Esophagus muscularis mucosa (tissue), 4 donors: ENCODE measurements at regions of chr9 and their contacts with region 1.

Region 1: GRCh38 chr9:26975693-26976059 is 19.5 kb downstream of the IFT74 start:
- DNase-seq: no peak
- H3K4me3 ChIP-seq: peak overlapping the region in 1 of 4 donors; percentile 8
- H3K27ac ChIP-seq: no peak overlapping the region
- H3K4me1 ChIP-seq: peaks cover 0 to 12% (median 3%) of the 10 kb centered on the region in 4 donors
- H3K27me3 ChIP-seq: no peaks in the 10 kb centered on the region
- CTCF ChIP-seq: peak; percentile 44 to 61 (median 50)
- EP300 ChIP-seq: no peak
- POLR2A ChIP-seq: no peak

Region 2: DNA sequence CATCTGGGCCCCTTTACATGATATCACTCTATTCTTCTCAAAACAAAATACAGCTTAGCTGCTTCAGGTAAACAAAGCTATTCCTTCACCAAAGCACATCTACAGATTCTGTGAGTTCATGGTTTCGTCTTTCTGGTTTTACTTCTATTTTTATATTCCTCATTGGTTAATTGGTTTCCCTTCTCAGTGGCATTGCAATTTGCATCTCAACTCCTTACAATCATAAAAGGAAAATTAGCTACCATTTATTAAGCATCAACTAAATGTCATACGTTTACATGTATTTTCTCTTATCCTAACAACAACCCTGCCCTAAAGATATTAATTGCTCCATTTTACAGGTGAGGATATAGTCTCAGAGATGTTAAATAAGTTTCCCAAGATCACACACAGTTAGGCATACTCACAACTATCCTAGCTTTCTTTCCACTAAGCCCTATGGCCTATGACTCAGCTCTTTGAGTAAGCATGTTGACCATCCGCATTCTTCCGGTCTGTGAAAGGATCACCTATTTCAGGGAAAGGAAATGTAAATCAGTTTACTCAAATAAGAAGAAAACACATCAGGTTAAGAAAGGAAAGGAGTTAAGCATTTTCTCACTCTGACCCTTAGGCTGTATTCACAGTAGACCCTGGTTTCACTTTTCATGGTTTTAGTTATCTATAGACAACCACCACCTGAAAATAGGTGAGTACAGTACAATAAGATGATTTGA is 229.2 kb before region 1 on chr9:
- intact Hi-C with region 1: loop called (anchors 5 kb)
- DNase-seq: no peak
- H3K4me3 ChIP-seq: no peak overlapping the region
- H3K27ac ChIP-seq: no peak overlapping the region
- H3K4me1 ChIP-seq: no peaks in the 10 kb centered on the region
- H3K27me3 ChIP-seq: no peaks in the 10 kb centered on the region
- CTCF ChIP-seq: no peak
- EP300 ChIP-seq: no peak
- POLR2A ChIP-seq: no peak

Region 3: GRCh38 chr9:26863074-26863473 is 112.6 kb before region 1 on chr9:
- intact Hi-C with region 1: no loop called
- DNase-seq: no peak
- H3K4me3 ChIP-seq: no peak overlapping the region
- H3K27ac ChIP-seq: no peak overlapping the region
- H3K4me1 ChIP-seq: peaks cover 0 to 15% (median 11%) of the 10 kb centered on the region in 4 donors
- H3K27me3 ChIP-seq: no peaks in the 10 kb centered on the region
- CTCF ChIP-seq: peak; percentile 28 to 48 (median 45)
- EP300 ChIP-seq: no peak
- POLR2A ChIP-seq: no peak

Region 4: DNA sequence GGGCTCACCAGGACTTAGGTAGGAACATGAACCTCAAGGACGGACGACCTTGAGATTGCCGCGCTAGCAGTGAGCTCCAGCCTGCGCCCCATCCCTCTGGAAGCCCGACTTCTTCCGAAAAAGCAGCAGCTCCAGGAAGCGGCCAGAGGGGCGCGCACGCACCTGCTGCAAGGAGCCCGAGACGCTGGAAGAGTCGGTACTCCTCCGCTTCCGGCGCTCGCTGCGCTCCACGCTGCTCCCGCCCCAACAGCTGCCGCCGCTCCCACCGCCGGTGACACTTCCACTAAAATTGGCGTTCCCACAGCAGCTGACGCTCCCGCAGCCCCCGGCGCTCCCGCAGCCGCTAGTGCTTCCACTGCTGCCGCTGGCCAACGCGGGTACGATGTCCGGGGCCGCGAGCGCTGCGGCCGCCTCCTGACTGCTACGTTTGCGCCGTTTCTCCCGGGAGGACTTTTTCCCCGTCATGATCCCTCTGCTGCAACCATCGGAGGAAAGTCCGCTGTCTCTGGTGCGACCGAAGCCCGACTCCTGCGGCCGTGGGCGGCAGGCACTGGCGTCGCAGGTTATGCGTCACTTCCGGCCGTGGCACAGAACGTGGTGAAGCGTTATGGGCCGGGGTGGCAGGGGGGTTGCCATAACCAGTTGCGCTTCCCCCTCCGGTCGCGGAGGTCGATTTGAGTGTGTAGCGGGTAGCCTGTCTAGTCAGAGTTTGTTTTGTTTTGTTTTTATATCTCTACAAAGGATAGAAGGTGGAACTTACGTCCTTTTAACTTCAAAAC is 83.2 kb before region 1 on chr9 and contains the start of gene CAAP1:
- intact Hi-C with region 1: loop called (anchors 5 kb)
- DNase-seq: peak; percentile 97
- H3K4me3 ChIP-seq: peak within 1 kb of the TSS; percentile 95 to 100 (median 98)
- H3K27ac ChIP-seq: peak within 1 kb of the TSS; percentile 98 to 100 (median 99)
- H3K4me1 ChIP-seq: peaks cover 16 to 41% (median 37%) of the 10 kb centered on the region in 4 donors
- H3K27me3 ChIP-seq: no peaks in the 10 kb centered on the region
- CTCF ChIP-seq: peak in 2 of 3 experiments; percentile 19 to 45
- EP300 ChIP-seq: no peak
- POLR2A ChIP-seq: peak; percentile 50
- total RNA-seq, gene CAAP1: 15.3 to 18.7 (median 16.2) TPM

Region 5: DNA sequence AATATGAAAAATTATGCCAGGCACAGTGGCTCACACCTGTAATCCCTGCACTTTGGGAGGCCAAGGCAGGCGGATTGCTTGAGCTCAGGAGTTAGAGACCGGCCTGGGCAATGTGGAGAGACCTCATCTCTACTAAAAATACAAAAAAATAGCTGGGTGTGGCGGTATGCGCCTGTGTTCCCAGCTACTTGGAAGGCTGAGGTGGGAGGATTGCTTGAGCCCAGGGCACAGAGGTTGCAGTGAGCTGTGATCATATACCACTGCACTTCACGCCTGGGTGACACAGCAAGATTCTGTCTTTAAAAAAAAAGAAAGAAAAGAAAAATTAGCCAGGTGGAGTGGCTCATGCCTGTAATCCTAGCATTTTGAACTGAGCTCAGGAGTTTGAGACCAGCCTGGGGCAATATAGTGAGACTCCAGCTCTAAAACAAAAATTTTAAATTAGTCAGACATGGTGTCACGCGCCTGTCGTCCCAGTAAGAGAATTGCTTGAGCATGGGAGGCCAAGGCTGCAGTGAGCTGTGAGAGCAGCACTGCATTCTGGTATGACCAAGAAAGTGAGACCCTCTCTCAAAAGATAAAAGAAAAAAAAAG is 46.7 kb before region 1 on chr9:
- intact Hi-C with region 1: loop called (anchors 10 kb)
- DNase-seq: no peak
- H3K4me3 ChIP-seq: no peak overlapping the region
- H3K27ac ChIP-seq: no peak overlapping the region
- H3K4me1 ChIP-seq: peaks cover 0 to 12% (median 3%) of the 10 kb centered on the region in 4 donors
- H3K27me3 ChIP-seq: no peaks in the 10 kb centered on the region
- CTCF ChIP-seq: no peak
- EP300 ChIP-seq: no peak
- POLR2A ChIP-seq: no peak